ENCODE measurements at regions of chr6 and their contacts with region 1.

Region 1: GRCh38 chr6:53651764-53652401 is 13.7 kb downstream of the KLHL31 start:
- DNase-seq: peak; percentile 92 to 94
- H3K4me3 ChIP-seq: peak overlapping the region; percentile 53
- H3K4me3 Mint-ChIP-seq: peak overlapping the region; percentile 99
- H3K27ac Mint-ChIP-seq: peak overlapping the region; percentile 99
- H3K4me1 ChIP-seq: peaks cover 6% of the 10 kb centered on the region; the same call in 1 of the 2 replicates
- H3K4me1 Mint-ChIP-seq: peaks cover 10% of the 10 kb centered on the region
- H3K27me3 ChIP-seq: no peaks in the 10 kb centered on the region
- H3K27me3 Mint-ChIP-seq: no peaks in the 10 kb centered on the region
- CTCF ChIP-seq: peak; percentile 49 to 54

Region 2: DNA sequence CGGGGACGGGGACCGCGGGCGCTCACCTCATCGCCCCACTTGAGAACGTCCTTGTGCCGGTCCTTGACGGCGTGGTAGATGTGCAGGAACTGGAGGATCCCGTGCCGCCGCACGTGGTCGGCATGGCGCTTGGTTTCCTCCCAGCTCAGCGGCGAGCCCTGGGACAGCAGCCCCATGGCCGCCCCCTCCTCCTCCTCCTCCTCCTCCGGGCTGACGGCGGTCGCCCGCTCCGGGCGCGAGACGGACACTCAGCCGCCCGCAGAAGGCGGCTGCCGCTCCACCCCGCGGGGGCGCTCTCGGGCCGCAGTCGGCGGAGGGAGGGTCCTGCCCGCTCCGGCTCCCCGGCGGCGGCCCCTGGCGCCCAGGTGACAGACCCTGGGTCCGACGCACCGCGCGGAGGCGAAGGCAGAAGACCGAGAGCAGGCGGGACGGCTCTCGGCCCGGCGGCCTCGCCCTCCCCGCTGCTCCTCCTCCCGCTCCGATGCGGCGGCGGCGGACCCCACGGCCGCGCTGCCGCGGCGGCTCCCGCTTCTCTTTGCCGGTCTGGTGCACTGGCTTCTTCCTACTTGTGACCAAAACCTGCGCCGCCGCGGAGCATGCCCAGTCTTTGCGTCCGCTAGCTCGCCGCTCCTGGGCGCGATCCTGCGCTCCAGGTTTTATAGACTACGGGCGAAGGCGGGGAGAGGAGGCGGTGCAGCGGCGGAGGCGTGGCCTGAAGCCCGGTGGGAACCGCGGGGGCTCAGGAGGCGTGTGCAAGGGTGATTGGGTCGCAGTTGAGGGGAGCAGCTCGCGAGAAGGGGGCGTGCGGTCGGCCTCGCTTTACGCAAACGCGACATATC is 107.2 kb before region 1 on chr6 and contains the start of gene GCLC:
- CTCF ChIA-PET with region 1: interaction called, 16 read pairs
- POLR2A ChIA-PET with region 1: interaction called, 18 read pairs
- intact Hi-C with region 1: loop called (anchors 1 kb)
- DNase-seq: peak; percentile 93 to 94
- H3K4me3 ChIP-seq: peak within 1 kb of the TSS; percentile 98
- H3K4me3 Mint-ChIP-seq: peak within 1 kb of the TSS; percentile 98
- H3K27ac Mint-ChIP-seq: peak within 1 kb of the TSS; percentile 94
- H3K4me1 ChIP-seq: peaks cover 14% of the 10 kb centered on the region
- H3K4me1 Mint-ChIP-seq: peaks cover 19% of the 10 kb centered on the region
- H3K27me3 ChIP-seq: no peaks in the 10 kb centered on the region
- H3K27me3 Mint-ChIP-seq: no peaks in the 10 kb centered on the region
- CTCF ChIP-seq: peak; percentile 42 to 75
- total RNA-seq, gene GCLC: 70.1 and 88.9 TPM in 2 replicates

Region 3: DNA sequence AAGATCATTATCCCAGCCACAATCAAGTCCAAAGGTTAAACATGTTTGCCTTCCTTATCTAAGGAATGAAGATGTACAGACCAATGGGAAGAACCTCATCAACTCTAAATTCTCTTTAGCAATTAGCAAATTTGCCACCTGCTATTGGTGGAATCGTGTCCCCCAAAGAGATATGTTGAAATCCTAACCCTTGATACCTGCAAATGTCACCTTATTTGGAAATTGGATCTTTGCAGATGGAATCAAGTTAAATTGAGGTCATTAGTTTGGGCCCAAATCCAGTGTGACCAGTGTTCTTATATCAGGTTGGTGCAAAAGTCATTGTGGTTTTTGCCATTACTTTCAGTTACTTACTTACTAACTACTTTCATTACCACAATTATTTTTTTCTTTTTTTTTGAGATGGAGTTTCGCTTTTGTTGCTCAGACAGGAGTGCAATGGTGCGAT is 17.7 kb before region 1 on chr6:
- CTCF ChIA-PET with region 1: no interaction called
- POLR2A ChIA-PET with region 1: interaction called, 5 read pairs
- intact Hi-C with region 1: loop called (anchors 1 kb)
- DNase-seq: peak in 1 of 2 experiments; percentile 65
- H3K4me3 ChIP-seq: no peak overlapping the region
- H3K4me3 Mint-ChIP-seq: peak overlapping the region; percentile 62
- H3K27ac Mint-ChIP-seq: peak overlapping the region; percentile 96
- H3K4me1 ChIP-seq: peaks cover 47% of the 10 kb centered on the region
- H3K4me1 Mint-ChIP-seq: peaks cover 27% of the 10 kb centered on the region
- H3K27me3 ChIP-seq: no peaks in the 10 kb centered on the region
- H3K27me3 Mint-ChIP-seq: no peaks in the 10 kb centered on the region
- CTCF ChIP-seq: no peak

Region 4: GRCh38 chr6:53691667-53692133 is 39.8 kb after region 1 on chr6:
- CTCF ChIA-PET with region 1: no interaction called
- POLR2A ChIA-PET with region 1: no interaction called
- intact Hi-C with region 1: no loop called
- DNase-seq: no peak
- H3K4me3 ChIP-seq: no peak overlapping the region
- H3K4me3 Mint-ChIP-seq: no peak overlapping the region
- H3K27ac Mint-ChIP-seq: no peak overlapping the region
- H3K4me1 ChIP-seq: peaks cover 22% of the 10 kb centered on the region
- H3K4me1 Mint-ChIP-seq: peaks cover 30% of the 10 kb centered on the region
- H3K27me3 ChIP-seq: no peaks in the 10 kb centered on the region
- H3K27me3 Mint-ChIP-seq: no peaks in the 10 kb centered on the region
- CTCF ChIP-seq: no peak

Region 5: GRCh38 chr6:53718597-53719460 is 66.9 kb after region 1 on chr6:
- CTCF ChIA-PET with region 1: interaction called, 11 read pairs
- POLR2A ChIA-PET with region 1: no interaction called
- intact Hi-C with region 1: no loop called
- DNase-seq: peak; percentile 59 to 68
- H3K4me3 ChIP-seq: no peak overlapping the region
- H3K4me3 Mint-ChIP-seq: peak overlapping the region; percentile 28
- H3K27ac Mint-ChIP-seq: no peak overlapping the region
- H3K4me1 ChIP-seq: peaks cover 17% of the 10 kb centered on the region
- H3K4me1 Mint-ChIP-seq: peaks cover 22% of the 10 kb centered on the region
- H3K27me3 ChIP-seq: no peaks in the 10 kb centered on the region
- H3K27me3 Mint-ChIP-seq: no peaks in the 10 kb centered on the region
- CTCF ChIP-seq: peak; percentile 67 to 78

Region 6: DNA sequence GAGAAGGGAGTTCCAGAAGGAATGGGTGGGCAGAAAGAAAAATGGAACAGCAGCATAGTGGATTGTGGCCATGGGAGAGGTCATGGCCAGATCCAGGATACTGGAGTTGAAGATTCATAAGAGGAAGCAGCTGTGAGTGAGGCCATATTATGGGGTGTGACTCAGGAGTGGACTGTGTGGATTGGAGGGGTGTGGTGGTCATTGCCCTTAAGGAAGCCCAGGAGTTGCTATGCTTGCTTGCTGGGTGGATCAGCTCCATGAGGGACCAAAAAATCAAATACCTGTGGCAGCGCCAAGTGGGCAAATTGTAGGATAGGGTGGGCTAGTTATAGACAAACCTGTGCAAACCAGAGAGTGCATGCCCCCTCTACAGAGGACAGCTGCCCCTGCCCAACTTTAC is 161.2 kb after region 1 on chr6:
- CTCF ChIA-PET with region 1: no interaction called
- POLR2A ChIA-PET with region 1: no interaction called
- intact Hi-C with region 1: no loop called
- DNase-seq: no peak
- H3K4me3 ChIP-seq: no peak overlapping the region
- H3K4me3 Mint-ChIP-seq: no peak overlapping the region
- H3K27ac Mint-ChIP-seq: no peak overlapping the region
- H3K4me1 ChIP-seq: peaks cover 52% of the 10 kb centered on the region
- H3K4me1 Mint-ChIP-seq: peaks cover 29% of the 10 kb centered on the region
- H3K27me3 ChIP-seq: no peaks in the 10 kb centered on the region
- H3K27me3 Mint-ChIP-seq: no peaks in the 10 kb centered on the region
- CTCF ChIP-seq: no peak

Measured in Caco-2 (cell line).